Endothelial cell of umbilical vein (primary cell): ENCODE measurements at regions of chr19 and their contacts with region 1.

Region 1: GRCh38 chr19:39671738-39672363 is 16.1 kb downstream of the LGALS16 start:
- DNase-seq: peak; percentile 44
- H3K4me3 ChIP-seq: no peak overlapping the region
- H3K27ac ChIP-seq: no peak overlapping the region
- H3K4me1 ChIP-seq: no peaks in the 10 kb centered on the region
- H3K27me3 ChIP-seq: peaks cover 3 to 5% of the 10 kb centered on the region in 2 experiments
- CTCF ChIP-seq: peak; percentile 29 to 39
- POLR2A ChIP-seq: no peak

Region 2: DNA sequence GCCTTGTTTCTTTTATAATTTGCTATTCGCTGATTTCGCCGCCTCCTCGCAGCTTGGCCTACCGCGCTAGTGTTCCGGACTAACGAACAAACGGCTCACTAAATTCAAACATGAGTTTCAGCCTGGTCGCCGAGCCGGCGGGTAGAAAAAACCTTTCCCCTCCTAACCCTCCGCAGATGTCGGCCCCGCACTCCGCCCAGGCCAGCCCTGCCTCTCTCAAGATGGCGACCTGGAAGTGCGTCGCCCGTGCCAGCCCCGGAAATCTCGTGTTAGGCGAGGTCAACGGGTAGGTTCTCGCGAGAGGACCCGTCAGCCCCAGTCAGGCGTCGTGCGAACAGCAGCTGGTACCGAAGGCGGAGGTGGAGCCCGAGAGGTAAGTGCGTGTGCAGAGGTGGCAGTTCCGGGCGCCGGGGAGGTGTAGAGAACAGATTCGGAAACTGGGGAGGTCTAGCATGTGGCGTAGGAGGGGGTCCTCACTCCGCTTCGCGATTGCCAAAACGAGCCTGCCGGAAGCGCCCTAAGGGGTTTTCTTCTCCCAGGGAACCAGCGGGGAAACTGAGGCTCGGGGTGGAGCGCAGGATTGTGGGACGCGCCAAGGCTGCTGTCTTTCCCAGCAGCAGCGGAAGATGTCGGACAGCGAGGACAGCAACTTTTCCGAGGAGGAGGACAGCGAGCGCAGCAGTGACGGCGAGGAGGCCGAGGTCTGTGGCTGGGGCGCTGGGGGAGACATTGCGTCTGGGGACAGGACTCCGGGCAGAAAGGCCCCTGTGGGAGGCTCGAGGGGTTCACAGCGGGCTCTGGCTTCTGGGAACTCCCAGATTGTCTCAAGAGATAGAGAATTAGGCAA is 226.4 kb before region 1 on chr19 and contains the start of gene SUPT5H:
- CTCF ChIA-PET with region 1: interaction called, 17 read pairs
- POLR2A ChIA-PET with region 1: no interaction called
- dilution Hi-C with region 1: no loop called
- intact Hi-C with region 1: no loop called
- DNase-seq: peak; percentile 98
- H3K4me3 ChIP-seq: peak within 1 kb of the TSS; percentile 85 to 98 (median 94)
- H3K27ac ChIP-seq: peak within 1 kb of the TSS; percentile 94
- H3K4me1 ChIP-seq: peaks cover 20% of the 10 kb centered on the region
- H3K27me3 ChIP-seq: no peaks in the 10 kb centered on the region
- CTCF ChIP-seq: no peak
- POLR2A ChIP-seq: peak; percentile 81
- total RNA-seq, gene SUPT5H: 108 and 120 TPM in 2 replicates

Region 3: DNA sequence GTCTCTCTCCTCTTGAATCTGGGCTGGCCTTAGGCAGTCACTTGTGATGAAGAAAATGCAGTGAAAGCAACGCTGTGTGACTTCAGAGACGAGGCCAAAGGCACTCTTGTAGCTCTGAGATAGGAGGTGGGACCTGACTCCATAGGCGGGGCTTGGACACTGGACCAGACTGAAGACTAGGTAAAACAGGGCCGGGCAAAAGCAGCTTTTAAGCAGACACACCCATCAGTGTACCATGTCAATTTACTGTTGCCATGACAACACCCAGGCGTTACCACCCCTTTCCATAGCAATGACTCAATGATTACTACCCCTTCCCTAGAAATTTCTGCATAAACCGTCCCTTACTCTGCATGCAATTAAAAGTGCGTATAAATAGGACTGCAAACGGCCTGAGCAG is 125.3 kb before region 1 on chr19:
- CTCF ChIA-PET with region 1: interaction called, 78 read pairs
- POLR2A ChIA-PET with region 1: no interaction called
- dilution Hi-C with region 1: no loop called
- intact Hi-C with region 1: loop called (anchors 1 kb)
- DNase-seq: no peak
- H3K4me3 ChIP-seq: no peak overlapping the region
- H3K27ac ChIP-seq: no peak overlapping the region
- H3K4me1 ChIP-seq: peaks cover 9% of the 10 kb centered on the region
- H3K27me3 ChIP-seq: peaks cover 8 to 11% of the 10 kb centered on the region in 2 experiments
- CTCF ChIP-seq: no peak
- POLR2A ChIP-seq: no peak

Region 4: DNA sequence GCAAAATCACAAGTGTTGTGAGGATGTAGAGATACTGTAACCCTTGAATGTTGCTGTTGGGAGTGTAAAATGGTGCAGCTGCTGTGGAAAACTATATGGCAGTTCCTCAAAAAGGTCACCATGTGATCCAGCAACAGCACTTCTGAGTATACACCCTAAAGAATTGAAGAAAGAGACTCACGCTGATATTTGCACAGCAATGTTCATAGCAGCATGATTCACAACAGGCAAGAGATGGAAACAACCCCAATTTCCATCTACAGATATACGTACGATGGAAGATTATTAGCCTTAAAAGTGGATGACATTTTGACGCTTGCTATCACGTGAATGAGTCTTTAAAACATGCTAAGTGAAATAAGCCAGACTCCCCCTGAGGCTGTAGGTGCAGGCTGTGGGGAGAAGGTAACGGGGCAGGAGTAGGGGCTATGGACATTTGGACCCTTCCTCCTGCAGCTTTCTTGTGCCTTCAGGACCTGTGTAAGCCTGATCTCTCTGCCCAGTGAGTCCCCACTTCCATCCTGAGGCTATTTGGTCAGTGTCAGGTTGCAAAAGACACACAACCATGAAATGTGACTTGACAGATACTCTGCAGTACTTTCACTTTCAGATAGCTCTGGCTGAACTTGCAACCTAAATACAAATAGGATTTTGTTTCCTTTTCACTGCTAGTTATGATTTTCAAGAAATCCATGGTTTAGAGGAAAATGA is 114.3 kb before region 1 on chr19:
- CTCF ChIA-PET with region 1: interaction called, 17 read pairs
- POLR2A ChIA-PET with region 1: no interaction called
- dilution Hi-C with region 1: loop called (anchors 10 kb)
- intact Hi-C with region 1: no loop called
- DNase-seq: no peak
- H3K4me3 ChIP-seq: no peak overlapping the region
- H3K27ac ChIP-seq: no peak overlapping the region
- H3K4me1 ChIP-seq: no peaks in the 10 kb centered on the region
- H3K27me3 ChIP-seq: peaks cover 5% of the 10 kb centered on the region in 2 experiments
- CTCF ChIP-seq: no peak
- POLR2A ChIP-seq: no peak

Region 5: DNA sequence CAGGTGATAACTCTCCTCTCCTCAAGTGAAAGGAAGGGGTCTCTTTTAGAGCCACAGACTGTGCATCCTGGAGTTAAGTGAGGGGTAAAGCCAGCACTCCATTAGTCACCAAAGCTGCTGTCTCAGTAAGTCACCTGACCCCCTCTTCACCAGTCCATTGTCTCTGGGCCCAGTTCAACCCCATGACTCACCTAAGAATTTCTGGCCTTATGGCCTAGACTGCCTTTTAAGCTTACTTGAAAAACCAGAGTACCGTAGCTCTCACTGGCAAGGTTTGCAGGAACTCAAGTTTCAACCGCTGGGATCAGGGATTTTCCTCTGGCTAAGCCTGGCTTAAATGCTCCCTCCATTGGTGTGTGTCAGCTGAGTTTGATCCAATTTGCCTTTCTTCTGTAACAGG is 108.4 kb before region 1 on chr19:
- CTCF ChIA-PET with region 1: no interaction called
- POLR2A ChIA-PET with region 1: no interaction called
- dilution Hi-C with region 1: loop called (anchors 10 kb)
- intact Hi-C with region 1: no loop called
- DNase-seq: no peak
- H3K4me3 ChIP-seq: no peak overlapping the region
- H3K27ac ChIP-seq: no peak overlapping the region
- H3K4me1 ChIP-seq: no peaks in the 10 kb centered on the region
- H3K27me3 ChIP-seq: peaks cover 0 to 3% of the 10 kb centered on the region in 2 experiments
- CTCF ChIP-seq: no peak
- POLR2A ChIP-seq: no peak